ENCODE measurements at regions of chr4 and their contacts with region 1.

Region 1: GRCh38 chr4:20684852-20685763 is 15.2 kb upstream of the PACRGL start:
- DNase-seq: peak; percentile 3
- H3K4me3 ChIP-seq: no peak overlapping the region
- H3K27ac ChIP-seq: no peak overlapping the region
- H3K27me3 ChIP-seq: peaks cover 12% of the 10 kb centered on the region
- CTCF ChIP-seq: peak; percentile 61

Region 2: DNA sequence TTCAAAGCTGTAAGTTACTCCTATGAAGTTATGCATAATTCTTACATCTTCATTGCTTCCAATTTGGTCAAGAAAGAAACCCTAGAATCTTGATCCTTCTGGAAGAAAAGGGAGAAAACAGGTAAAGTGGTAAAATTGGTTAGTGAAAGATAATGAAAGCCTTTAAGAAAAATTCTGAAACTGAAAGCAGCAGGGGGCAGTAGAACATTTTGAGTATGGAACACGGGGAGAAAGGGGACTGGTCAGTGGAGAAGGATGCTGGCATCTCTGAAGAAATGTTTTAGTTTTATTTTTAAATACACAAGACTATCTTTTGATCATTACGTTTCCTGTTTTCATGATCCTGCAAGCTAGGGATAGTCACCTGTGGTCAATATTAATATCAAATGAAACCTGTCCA is 379.1 kb before region 1 on chr4:
- CTCF ChIA-PET with region 1: interaction called, 52 read pairs
- POLR2A ChIA-PET with region 1: no interaction called
- DNase-seq: peak; percentile 27
- H3K4me3 ChIP-seq: no peak overlapping the region
- H3K27ac ChIP-seq: no peak overlapping the region
- H3K27me3 ChIP-seq: no peaks in the 10 kb centered on the region
- CTCF ChIP-seq: peak; percentile 59

Region 3: GRCh38 chr4:20422398-20422797 is 262.7 kb before region 1 on chr4:
- CTCF ChIA-PET with region 1: interaction called, 17 read pairs
- POLR2A ChIA-PET with region 1: interaction called, 3 read pairs
- DNase-seq: no peak
- H3K4me3 ChIP-seq: no peak overlapping the region
- H3K27ac ChIP-seq: no peak overlapping the region
- H3K27me3 ChIP-seq: no peaks in the 10 kb centered on the region
- CTCF ChIP-seq: peak; percentile 58

Region 4: DNA sequence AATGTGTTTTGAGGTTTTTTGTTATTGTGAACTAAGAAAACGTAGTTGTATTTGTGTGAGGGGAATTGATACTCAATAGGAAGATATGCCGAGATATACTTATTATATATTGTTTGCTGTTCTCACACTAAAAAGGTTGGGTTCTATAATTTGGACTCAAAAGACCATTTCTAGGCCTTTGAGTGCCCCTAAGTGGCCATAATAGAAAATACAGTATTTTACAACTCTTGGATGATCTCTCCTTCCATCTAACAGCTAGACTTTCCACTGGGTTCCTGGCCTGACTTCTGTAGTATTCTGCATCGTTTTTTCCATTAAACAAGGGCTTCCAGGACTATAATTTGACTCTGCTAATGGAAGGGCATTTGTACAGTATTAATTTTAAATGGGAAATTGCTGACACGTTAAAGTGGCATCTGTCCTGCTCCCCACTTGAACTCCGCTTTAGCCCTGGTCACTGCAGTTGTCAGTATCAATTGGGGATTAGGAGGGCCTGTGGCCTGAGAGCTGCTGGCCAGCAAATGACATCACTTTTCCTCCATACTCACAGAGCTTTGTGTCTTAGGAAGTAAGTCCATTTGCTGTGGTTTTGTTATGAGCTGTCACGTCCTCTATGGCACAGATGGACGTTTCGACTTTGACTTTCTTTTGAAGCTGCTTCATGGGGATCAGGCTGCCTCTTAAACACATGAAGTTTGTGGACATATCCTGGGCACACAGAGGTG is 256.5 kb before region 1 on chr4:
- CTCF ChIA-PET with region 1: interaction called, 22 read pairs
- POLR2A ChIA-PET with region 1: no interaction called
- DNase-seq: no peak
- H3K4me3 ChIP-seq: no peak overlapping the region
- H3K27ac ChIP-seq: no peak overlapping the region
- H3K27me3 ChIP-seq: no peaks in the 10 kb centered on the region
- CTCF ChIP-seq: peak; percentile 46

Measured in AG04450 (cell line).